Head of caudate nucleus (tissue), 42 donors: ENCODE measurements at regions of chr10 and their contacts with region 1.

Region 1: GRCh38 chr10:130333185-130333584 is 197.0 kb downstream of the GLRX3 start:
- DNase-seq: peak in 6 of 42 donors; percentile 10 to 41 (median 24)

Region 2: DNA sequence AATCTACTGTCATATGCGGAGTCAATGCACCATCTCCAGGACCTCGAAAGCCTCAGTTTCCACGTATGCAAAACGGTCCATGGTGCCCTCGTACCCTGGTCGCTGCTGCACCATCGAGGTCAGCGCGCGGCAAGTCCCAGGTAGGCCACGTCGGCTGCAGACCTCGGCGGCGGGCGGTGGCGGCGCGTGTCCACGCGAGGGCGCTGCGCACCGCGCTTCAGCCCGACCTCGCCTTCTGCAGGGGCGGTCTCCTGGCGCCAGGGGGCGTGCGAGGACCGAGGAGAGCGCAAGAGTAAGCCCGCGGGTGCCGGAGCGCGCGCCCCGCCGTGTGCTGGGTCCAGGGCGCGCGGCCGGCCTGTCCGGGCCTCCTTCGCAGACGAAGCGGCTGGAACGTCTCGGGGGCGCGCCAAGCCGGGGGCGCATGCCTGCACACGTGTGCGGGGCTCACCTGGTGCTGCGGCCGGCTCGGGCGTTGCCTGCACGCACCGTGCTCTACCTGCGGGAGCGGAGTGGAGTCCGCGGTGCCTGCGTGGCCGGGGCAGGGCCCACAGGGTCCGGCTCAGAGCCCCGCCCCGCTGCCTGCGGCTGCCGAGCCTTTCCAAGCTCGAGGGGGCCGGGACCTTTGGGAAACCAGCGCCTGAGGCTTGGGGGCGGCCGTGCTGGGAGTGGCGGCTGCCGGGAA is 143.0 kb before region 1 on chr10:
- intact Hi-C with region 1: loop called (anchors 5 kb)
- DNase-seq: peak; percentile 59 to 95 (median 89)

Region 3: GRCh38 chr10:130647341-130647740 is 314.2 kb after region 1 on chr10:
- intact Hi-C with region 1: no loop called
- DNase-seq: peak in 1 of 42 donors; percentile 20